GM12878 (cell line): ENCODE measurements at regions of chr19 and their contacts with region 1.

Region 1: GRCh38 chr19:55258828-55259539 is at the start of gene PPP6R1:
- DNase-seq: peak; percentile 97
- ATAC-seq: peak; percentile 85
- H3K4me3 ChIP-seq: peak within 1 kb of the TSS; percentile 100
- H3K27ac ChIP-seq: peak within 1 kb of the TSS; percentile 96
- H3K4me1 ChIP-seq: peaks cover 7% of the 10 kb centered on the region
- H3K27me3 ChIP-seq: no peaks in the 10 kb centered on the region
- CTCF ChIP-seq: no peak
- EP300 ChIP-seq: 0 out of 4 replicates have a peak, but pooled peaks have one; percentile 5 to 30
- POLR2A ChIP-seq: peak; percentile 89
- RAD21 ChIP-seq: no peak
- polyA plus RNA-seq, gene PPP6R1: 0.80 to 2.5 TPM

Region 2: DNA sequence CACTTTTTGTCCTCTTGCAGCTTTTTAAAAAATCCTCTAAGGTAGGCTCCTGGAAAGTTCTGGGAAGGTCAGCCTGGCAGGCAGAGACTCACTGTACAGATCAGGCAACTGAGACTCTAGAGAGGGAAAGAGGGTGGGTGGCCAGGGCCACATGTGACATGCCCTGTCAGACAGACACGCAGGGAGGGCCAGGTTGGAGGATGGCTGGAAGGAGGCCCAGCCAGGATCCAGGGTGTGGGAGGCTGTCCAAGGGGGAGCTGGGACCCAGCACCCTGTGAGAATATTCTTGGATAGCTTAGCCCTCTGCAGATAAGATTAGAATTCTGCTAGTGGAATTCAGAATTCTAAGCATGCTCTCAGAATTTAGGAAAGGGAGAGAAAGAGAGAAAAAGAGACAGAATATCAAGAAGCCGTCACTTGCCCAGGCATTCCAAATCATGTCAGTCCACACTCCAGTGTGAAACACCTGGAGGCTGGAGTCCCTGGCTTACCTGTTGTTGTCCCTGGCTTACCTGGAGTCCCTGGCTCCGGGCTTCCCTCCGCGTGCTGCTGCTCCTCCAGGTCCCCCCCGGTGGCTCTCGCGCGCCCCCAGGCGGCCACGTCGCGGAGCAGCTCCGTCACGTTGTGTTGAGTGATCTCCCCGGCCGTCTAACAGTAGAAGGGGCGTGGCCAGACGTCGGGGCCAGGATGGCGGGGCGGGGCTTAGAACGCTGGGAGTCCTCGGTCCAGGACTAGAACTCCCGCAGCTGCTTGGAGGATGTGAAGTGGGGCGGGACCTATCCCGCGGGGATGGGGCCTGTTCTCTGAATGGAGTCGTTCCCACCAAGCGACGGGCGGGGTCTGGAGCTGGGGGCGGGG is 98.6 kb before region 1 on chr19:
- CTCF ChIA-PET with region 1: no interaction called
- POLR2A ChIA-PET with region 1: no interaction called
- RAD21 ChIA-PET with region 1: no interaction called
- SMC1A ChIA-PET with region 1: no interaction called
- in situ Hi-C with region 1: no loop called
- intact Hi-C with region 1: no loop called
- DNase-seq: peak; percentile 32
- ATAC-seq: peak; percentile 99
- H3K4me3 ChIP-seq: no peak overlapping the region
- H3K27ac ChIP-seq: no peak overlapping the region
- H3K4me1 ChIP-seq: no peaks in the 10 kb centered on the region
- H3K27me3 ChIP-seq: no peaks in the 10 kb centered on the region; a peak in 2 of 4 replicates
- CTCF ChIP-seq: peak; percentile 90 to 98 (median 94)
- EP300 ChIP-seq: no peak
- POLR2A ChIP-seq: no peak
- RAD21 ChIP-seq: peak; percentile 81

Region 3: DNA sequence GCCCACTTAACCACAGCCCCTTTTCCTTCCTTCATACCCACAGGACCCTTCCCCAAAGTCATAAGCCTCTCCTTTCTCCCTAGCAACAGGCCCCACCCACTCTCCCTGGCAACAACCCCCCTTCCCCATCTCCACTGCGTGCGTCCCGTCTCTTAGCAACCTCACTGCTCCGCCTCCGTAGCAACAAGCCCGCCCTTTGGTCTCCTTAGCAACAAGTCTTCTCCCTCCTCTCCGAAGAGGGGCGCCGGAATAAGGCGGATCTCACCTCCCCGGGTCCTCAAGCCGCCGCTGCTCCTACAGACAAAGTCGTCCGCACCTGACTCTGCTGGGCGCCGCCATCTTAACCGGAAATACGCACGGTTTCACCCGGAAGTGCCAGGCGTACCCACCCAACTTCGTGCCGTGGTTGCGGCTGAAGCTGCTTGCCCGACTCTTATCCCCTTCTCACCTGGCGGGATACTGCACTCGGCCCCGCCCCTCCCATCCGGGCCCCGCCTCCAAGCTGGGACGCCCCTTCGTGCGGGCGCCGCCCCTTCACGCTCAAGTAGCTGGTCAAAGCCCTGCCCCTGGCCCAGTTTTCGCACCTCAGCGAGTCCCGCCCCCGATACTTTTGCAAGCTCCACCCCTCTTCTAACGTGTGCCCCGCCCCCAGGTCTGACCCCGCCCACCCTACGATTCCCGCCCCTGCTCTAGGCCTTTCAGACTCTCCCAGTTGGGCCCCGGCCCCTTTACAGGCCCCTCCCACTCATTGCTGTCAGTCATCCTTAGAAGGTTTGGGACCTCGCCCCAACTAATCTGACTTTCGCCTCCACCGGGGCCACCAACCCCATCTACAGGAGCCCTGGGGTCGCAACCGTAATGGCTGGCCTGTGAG is 21.0 kb after region 1 on chr19 and contains the start of gene HSPBP1:
- CTCF ChIA-PET with region 1: interaction called, 6 read pairs
- POLR2A ChIA-PET with region 1: interaction called, 86 read pairs
- RAD21 ChIA-PET with region 1: interaction called, 46 read pairs
- SMC1A ChIA-PET with region 1: interaction called, 68 read pairs
- in situ Hi-C with region 1: no loop called
- intact Hi-C with region 1: loop called (anchors 1 kb)
- DNase-seq: peak; percentile 93
- ATAC-seq: peak; percentile 91
- H3K4me3 ChIP-seq: peak within 1 kb of the TSS; percentile 82
- H3K27ac ChIP-seq: peak within 1 kb of the TSS; percentile 50
- H3K4me1 ChIP-seq: peaks cover 42% of the 10 kb centered on the region
- H3K27me3 ChIP-seq: no peaks in the 10 kb centered on the region; a peak in 1 of 4 replicates
- CTCF ChIP-seq: no peak
- EP300 ChIP-seq: no peak
- POLR2A ChIP-seq: peak; percentile 84
- RAD21 ChIP-seq: no peak
- polyA plus RNA-seq, gene HSPBP1: 0.18 to 1.3 TPM

Region 4: DNA sequence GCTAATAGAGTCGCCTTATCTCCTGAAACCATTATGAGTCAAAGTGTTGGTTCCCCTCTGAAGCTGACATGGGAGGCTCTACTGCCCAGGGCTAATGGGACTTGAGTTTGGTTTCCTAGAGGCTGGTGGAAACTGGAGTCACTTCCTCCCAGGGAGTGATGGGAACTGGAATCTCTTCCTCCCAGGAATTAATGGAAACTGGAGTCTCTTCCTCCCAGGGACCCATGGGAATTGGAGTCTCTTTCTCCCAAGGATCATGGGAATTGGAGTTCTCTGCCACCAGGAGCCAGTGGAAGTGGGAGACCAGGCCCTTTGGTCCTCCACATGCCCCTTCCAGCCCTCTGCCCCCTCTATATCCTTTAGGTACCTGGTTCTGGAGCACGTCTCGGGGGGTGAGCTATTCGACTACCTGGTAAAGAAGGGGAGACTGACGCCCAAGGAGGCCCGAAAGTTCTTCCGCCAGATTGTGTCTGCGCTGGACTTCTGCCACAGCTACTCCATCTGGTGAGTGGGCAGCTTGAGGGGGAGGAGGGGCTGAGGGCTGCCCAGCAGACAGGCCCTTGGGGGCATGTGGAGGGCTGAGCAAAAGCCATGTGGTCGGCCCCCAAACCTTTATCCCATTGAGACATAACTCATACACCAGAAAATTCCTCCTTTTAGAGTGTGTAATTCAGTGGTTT is 30.3 kb after region 1 on chr19:
- CTCF ChIA-PET with region 1: interaction called, 25 read pairs
- POLR2A ChIA-PET with region 1: interaction called, 8 read pairs
- RAD21 ChIA-PET with region 1: interaction called, 5 read pairs
- SMC1A ChIA-PET with region 1: interaction called, 9 read pairs
- in situ Hi-C with region 1: no loop called
- intact Hi-C with region 1: no loop called
- DNase-seq: no peak
- ATAC-seq: no peak
- H3K4me3 ChIP-seq: no peak overlapping the region
- H3K27ac ChIP-seq: no peak overlapping the region
- H3K4me1 ChIP-seq: no peaks in the 10 kb centered on the region
- H3K27me3 ChIP-seq: no peaks in the 10 kb centered on the region
- CTCF ChIP-seq: no peak
- EP300 ChIP-seq: no peak
- POLR2A ChIP-seq: no peak
- RAD21 ChIP-seq: no peak

Region 5: GRCh38 chr19:55372316-55373081 is 113.5 kb after region 1 on chr19:
- CTCF ChIA-PET with region 1: no interaction called
- POLR2A ChIA-PET with region 1: no interaction called
- RAD21 ChIA-PET with region 1: no interaction called
- SMC1A ChIA-PET with region 1: no interaction called
- in situ Hi-C with region 1: no loop called
- intact Hi-C with region 1: no loop called
- DNase-seq: no peak
- ATAC-seq: peak; percentile 18; the same call in 2 of the 3 replicates
- H3K4me3 ChIP-seq: no peak overlapping the region
- H3K27ac ChIP-seq: no peak overlapping the region
- H3K4me1 ChIP-seq: no peaks in the 10 kb centered on the region
- H3K27me3 ChIP-seq: peaks cover 3 to 10% of the 10 kb centered on the region in 2 experiments
- CTCF ChIP-seq: no peak
- EP300 ChIP-seq: no peak
- POLR2A ChIP-seq: no peak
- RAD21 ChIP-seq: no peak

Region 6: DNA sequence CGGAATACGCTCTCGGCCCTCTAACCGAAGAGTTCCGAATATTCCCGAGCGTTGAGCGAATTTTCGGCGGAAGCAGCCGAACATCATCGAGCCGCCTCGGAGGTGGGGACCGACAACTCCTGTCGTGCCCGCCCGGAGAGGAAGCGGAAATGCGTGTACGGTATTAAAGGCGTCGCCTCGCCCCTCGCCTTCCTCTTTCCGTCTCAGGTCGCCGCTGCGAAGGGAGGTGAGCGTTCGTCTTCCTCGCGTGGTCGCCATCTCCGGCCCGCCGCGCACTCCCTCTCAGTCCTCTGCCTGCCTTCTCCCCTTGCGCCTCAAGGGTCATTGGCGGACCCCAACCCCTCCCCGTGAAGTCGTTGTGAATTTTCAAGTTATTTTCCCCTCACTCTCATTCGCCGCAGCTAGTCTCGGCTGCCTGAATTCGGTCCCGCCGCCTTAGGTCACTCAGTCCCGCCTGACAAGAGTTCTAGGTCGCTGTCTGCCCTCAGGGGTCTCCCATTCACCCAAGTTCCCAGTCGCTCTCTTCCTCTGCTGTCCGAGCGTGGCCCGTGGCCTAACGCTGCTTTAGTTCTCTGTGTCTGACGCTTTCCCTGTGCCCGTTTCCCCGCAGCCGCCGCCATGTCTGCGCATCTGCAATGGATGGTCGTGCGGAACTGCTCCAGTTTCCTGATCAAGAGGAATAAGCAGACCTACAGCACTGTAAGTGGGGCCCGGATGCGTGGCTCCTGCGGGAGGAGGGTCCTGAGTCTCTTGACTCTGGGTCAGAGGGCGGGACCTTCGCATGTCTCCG is 127.0 kb after region 1 on chr19 and contains the start of gene RPL28:
- CTCF ChIA-PET with region 1: interaction called, 5 read pairs
- POLR2A ChIA-PET with region 1: interaction called, 19 read pairs
- RAD21 ChIA-PET with region 1: interaction called, 16 read pairs
- SMC1A ChIA-PET with region 1: interaction called, 3 read pairs
- in situ Hi-C with region 1: no loop called
- intact Hi-C with region 1: loop called (anchors 10 kb)
- DNase-seq: peak; percentile 93
- ATAC-seq: peak; percentile 80
- H3K4me3 ChIP-seq: peak within 1 kb of the TSS; percentile 94
- H3K27ac ChIP-seq: peak within 1 kb of the TSS; percentile 90
- H3K4me1 ChIP-seq: peaks cover 28% of the 10 kb centered on the region
- H3K27me3 ChIP-seq: no peaks in the 10 kb centered on the region
- CTCF ChIP-seq: no peak
- EP300 ChIP-seq: no peak
- POLR2A ChIP-seq: peak; percentile 100
- RAD21 ChIP-seq: no peak
- polyA plus RNA-seq, gene RPL28: 290 to 479 TPM

Region 7: GRCh38 chr19:55407800-55408532 is 149.0 kb after region 1 on chr19:
- CTCF ChIA-PET with region 1: interaction called, 3 read pairs
- POLR2A ChIA-PET with region 1: interaction called, 15 read pairs
- RAD21 ChIA-PET with region 1: interaction called, 5 read pairs
- SMC1A ChIA-PET with region 1: no interaction called
- in situ Hi-C with region 1: no loop called
- intact Hi-C with region 1: no loop called
- DNase-seq: peak; percentile 97
- ATAC-seq: peak; percentile 96
- H3K4me3 ChIP-seq: peak overlapping the region; percentile 93
- H3K27ac ChIP-seq: peak overlapping the region; percentile 98
- H3K4me1 ChIP-seq: peaks cover 20% of the 10 kb centered on the region
- H3K27me3 ChIP-seq: no peaks in the 10 kb centered on the region
- CTCF ChIP-seq: no peak
- EP300 ChIP-seq: 0 out of 4 replicates have a peak, but pooled peaks of 1 of the 2 experiments have one; percentile 39
- POLR2A ChIP-seq: peak; percentile 39; the same call in 1 of the 2 replicates
- RAD21 ChIP-seq: no peak